ENCODE measurements at regions of chr16 and their contacts with region 1.

Region 1: DNA sequence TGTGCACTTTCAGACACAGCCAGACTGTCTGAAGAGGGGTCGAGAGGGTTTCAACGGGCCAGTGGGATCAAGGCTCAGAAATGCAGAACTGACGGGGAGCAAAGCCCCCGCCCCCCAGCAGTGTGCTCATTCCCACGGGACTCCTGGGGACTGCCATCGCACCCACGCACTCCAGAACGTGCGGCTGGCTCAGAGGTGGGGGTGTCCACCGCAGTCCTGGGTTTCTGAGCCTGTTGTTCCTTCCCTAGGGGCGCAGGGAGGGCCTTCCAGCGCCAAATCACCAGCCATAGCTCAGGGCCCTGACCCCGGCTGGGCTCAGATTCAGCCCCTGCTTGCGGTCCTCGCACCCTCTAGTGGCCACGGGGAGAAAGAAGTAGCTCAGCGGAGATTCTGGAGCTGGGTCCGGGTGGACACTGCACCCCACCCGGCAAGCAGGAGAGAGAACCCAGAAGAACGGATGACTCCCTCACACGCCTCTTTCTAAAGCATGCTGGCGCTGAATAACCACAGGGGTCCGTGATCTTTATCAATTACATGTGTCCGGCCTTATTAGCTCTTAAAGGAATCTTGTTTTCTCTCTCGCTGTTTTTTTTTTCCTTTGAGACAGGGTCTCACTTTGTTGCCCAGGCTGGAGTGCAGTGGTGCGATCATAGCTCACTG is 45.0 kb upstream of the USP7 start:
- DNase-seq: peak; percentile 61 to 93
- H3K4me3 ChIP-seq: 0 out of 8 replicates have a peak overlapping the region, but pooled peaks of 1 of the 4 experiments have one; percentile 4
- H3K27ac ChIP-seq: no peak overlapping the region
- H3K4me1 ChIP-seq: peaks cover 0 to 10% (median 5%) of the 10 kb centered on the region in 4 experiments; a peak in 6 of 7 replicates
- H3K27me3 ChIP-seq: no peaks in the 10 kb centered on the region; a peak in 1 of 7 replicates
- CTCF ChIP-seq: peak; percentile 87 to 97 (median 97)
- EP300 ChIP-seq: no peak
- POLR2A ChIP-seq: no peak
- RAD21 ChIP-seq: peak; percentile 95 to 98

Region 2: GRCh38 chr16:8295513-8296237 is 713.1 kb before region 1 on chr16:
- CTCF ChIA-PET with region 1: no interaction called
- POLR2A ChIA-PET with region 1: no interaction called
- DNase-seq: no peak
- H3K4me3 ChIP-seq: no peak overlapping the region
- H3K27ac ChIP-seq: no peak overlapping the region
- H3K4me1 ChIP-seq: no peaks in the 10 kb centered on the region
- H3K27me3 ChIP-seq: no peaks in the 10 kb centered on the region
- CTCF ChIP-seq: no peak
- EP300 ChIP-seq: no peak
- POLR2A ChIP-seq: no peak
- RAD21 ChIP-seq: no peak

Region 3: DNA sequence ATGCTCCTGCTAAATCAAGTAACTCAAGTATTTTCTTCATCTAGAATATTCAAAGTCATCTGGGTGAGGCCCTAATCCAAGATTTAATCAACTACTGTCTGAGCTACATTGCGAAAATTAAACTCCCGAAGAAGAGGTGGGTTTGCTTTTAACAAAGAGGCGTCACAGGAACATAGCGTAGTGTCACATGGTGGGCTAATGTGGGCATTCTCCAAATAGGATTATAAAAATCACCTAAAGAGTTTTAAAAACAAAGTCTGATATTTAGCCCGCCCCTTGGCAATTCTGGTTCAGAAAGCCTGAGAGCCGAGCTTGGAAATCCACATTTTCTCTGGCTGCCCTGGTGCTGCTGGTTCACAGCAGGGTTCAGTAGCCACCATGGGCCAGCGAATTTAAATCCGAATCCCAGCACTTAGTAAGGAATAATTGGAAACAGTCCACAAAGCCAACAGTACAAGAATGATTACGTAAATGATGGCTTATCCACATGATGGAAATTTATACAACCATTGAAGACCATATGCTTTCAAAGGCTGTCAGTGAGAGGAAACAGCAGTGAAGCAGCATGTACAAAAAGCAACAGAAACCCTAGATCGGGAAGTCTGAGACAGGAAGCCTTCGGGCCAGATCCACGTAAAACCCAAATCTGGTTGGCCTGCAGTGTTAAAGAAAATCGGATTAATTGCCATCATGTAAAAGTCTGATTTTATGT is 202.3 kb before region 1 on chr16:
- CTCF ChIA-PET with region 1: no interaction called
- POLR2A ChIA-PET with region 1: no interaction called
- DNase-seq: no peak
- H3K4me3 ChIP-seq: no peak overlapping the region
- H3K27ac ChIP-seq: no peak overlapping the region
- H3K4me1 ChIP-seq: no peaks in the 10 kb centered on the region
- H3K27me3 ChIP-seq: no peaks in the 10 kb centered on the region
- CTCF ChIP-seq: no peak
- EP300 ChIP-seq: no peak
- POLR2A ChIP-seq: no peak
- RAD21 ChIP-seq: no peak

Region 4: DNA sequence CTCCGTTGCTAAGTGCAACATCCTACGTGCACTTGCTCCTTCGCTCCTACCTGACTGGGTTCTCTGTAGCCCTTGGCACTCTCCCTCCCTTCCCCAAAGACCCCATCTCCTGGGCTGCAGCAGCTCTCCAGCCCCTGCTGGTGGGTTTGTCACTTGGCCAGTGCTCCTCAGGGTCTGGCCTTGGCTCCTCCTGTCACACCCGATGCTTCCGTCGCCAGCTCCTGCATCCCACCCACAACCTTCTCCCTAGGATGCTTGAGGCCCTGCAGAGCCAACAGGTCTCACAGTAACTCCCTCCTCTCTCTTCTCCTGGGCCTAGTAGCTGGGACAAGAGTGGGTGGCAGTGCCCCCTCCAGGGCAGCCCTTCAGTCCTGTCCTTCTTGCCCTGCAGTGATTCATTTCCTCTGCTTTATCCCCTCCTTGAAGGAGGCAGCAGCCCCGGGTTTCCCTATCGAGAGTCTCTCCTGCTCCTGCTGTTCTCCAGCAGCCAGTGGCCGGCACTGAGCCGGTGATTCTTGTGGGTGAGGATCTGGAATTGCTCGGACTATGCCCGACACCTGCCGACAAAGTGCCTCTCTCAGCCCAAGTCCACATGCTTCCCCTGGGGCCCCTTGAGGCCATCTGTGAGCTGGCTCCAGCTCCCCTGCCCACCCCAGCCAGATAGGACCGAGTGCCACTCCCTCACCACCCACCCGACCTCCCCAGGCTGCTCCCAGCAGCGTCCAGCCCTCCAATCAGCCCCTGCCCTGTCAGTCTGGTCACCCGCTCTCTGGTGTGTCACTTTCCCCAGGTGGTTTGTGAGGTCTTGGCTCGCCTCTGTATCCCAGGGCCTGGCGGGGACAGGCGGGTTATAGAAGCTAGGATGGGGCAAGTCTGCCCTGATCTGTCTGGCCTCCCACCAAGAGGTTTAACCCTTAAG is 122.8 kb before region 1 on chr16:
- CTCF ChIA-PET with region 1: interaction called, 37 read pairs
- POLR2A ChIA-PET with region 1: no interaction called
- DNase-seq: no peak
- H3K4me3 ChIP-seq: no peak overlapping the region; a peak in 1 of 8 replicates
- H3K27ac ChIP-seq: no peak overlapping the region
- H3K4me1 ChIP-seq: peaks cover 0 to 17% (median 9%) of the 10 kb centered on the region in 4 experiments; a peak in 5 of 7 replicates
- H3K27me3 ChIP-seq: no peaks in the 10 kb centered on the region
- CTCF ChIP-seq: peak; percentile 27 to 47 (median 30); a peak in 3 of 4 replicates
- EP300 ChIP-seq: no peak
- POLR2A ChIP-seq: no peak
- RAD21 ChIP-seq: peak in 1 of 2 experiments; percentile 30; a peak in 2 of 4 replicates

Region 5: DNA sequence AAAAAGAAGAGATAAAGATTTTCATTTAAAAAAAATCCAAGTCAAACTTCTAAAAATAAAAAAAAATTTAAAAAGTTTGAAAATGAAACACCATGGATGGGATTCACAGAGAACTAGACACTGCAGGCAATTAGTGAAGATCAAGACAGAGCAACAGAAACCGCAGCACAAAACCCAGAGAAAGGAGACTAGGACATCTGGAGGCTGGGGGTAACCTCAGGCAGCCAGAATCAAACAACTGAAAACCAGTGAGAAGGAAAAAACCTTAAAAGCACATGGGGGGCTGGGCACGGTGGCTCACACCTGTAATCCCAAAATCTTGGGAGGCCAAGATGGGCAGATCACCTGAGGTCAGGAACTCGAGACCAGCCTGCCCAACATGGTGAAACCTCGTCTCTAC is 95.9 kb before region 1 on chr16:
- CTCF ChIA-PET with region 1: interaction called, 39 read pairs
- POLR2A ChIA-PET with region 1: no interaction called
- DNase-seq: no peak
- H3K4me3 ChIP-seq: no peak overlapping the region
- H3K27ac ChIP-seq: no peak overlapping the region
- H3K4me1 ChIP-seq: no peaks in the 10 kb centered on the region; a peak in 1 of 7 replicates
- H3K27me3 ChIP-seq: no peaks in the 10 kb centered on the region
- CTCF ChIP-seq: no peak
- EP300 ChIP-seq: no peak
- POLR2A ChIP-seq: no peak
- RAD21 ChIP-seq: no peak

Region 6: DNA sequence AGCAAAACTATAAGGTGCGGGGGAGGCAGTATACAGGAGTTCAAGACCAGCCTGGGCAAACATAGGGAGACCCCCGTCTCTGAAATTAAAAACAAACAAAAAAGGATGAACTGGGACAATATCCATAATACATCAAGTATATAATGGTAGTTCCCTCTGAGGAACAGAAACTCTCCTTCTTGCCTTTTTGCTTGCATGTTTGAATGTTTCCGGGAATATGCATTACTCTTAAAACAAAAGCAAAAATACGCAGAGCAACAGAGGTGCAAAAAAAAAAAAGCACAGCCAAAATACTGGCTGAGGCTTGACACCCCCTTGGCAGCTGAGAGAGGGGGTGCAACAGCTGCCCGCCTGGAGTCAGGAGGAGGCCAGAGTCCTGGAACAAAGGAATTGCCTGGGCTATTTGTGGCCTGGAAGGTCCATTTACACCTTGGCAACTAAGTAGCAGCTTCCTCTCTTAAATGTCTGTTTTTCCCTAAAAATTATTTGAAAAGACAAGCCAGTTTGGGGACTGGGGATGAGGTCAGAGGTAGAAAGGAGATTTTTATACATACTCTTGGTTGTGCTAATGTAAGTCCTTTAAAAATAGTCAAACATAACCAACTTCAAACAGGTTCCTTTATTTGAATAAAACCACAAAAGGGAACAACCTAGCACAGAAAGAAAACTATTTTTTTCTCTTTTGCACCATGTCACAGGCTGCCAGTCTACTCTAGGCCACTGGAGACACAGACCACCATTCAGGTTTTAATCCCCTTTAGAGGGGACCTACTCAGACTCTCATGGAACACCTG is 64.6 kb before region 1 on chr16:
- CTCF ChIA-PET with region 1: interaction called, 189 read pairs
- POLR2A ChIA-PET with region 1: interaction called, 4 read pairs
- DNase-seq: no peak
- H3K4me3 ChIP-seq: peak overlapping the region in 1 of 4 experiments; percentile 16; a peak in 1 of 8 replicates
- H3K27ac ChIP-seq: no peak overlapping the region
- H3K4me1 ChIP-seq: peaks cover 6 to 15% (median 10%) of the 10 kb centered on the region in 4 experiments
- H3K27me3 ChIP-seq: no peaks in the 10 kb centered on the region
- CTCF ChIP-seq: no peak
- EP300 ChIP-seq: no peak
- POLR2A ChIP-seq: no peak
- RAD21 ChIP-seq: no peak

Region 7: GRCh38 chr16:8963825-8964441 is 44.8 kb before region 1 on chr16 and contains the start of gene USP7:
- CTCF ChIA-PET with region 1: interaction called, 25 read pairs
- POLR2A ChIA-PET with region 1: interaction called, 7 read pairs
- DNase-seq: peak; percentile 46 to 89
- H3K4me3 ChIP-seq: peak within 1 kb of the TSS; percentile 63 to 85 (median 76)
- H3K27ac ChIP-seq: 0 out of 2 replicates have a peak within 1 kb of the TSS, but pooled peaks have one; percentile 38
- H3K4me1 ChIP-seq: peaks cover 25 to 40% (median 26%) of the 10 kb centered on the region in 4 experiments
- H3K27me3 ChIP-seq: peaks cover 0 to 7% (median 2%) of the 10 kb centered on the region in 4 experiments; a peak in 3 of 7 replicates
- CTCF ChIP-seq: no peak
- EP300 ChIP-seq: no peak
- POLR2A ChIP-seq: no peak
- RAD21 ChIP-seq: no peak
- total RNA-seq, gene USP7: 208 and 211 TPM in 2 replicates

Region 8: DNA sequence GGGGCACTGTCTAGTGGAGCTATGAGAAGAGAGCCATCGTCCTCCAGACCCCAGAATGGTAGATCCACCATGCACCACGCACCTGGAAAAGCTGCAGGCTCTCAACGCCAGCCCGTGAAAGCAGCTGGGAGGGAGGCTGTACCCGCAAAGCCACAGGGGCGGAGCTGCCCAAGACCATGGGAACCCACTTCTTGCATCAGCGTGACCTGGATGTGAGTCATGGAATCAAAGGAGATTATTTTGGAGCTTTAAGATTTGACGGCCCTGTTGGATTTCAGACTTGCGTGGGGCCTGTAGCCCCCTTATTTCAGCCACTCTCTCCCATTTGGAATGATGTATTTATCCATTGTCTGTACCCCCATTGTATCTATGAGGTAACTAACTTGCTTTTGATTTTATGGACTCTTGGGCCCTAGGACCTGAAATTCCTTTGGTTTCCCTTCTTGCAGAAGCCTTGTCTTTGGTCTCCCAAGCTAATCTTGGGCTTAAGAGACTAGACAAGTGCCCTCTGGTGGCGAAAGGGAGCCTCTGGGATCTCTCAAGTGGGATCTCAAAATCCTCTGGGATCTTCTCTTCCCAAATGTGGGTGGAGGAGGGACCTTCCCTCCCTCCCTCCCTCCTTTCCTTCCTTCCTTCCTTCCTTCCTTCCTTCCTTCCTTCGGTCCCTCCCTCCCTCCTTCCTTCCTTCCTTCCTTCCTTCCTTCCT is 24.5 kb after region 1 on chr16:
- CTCF ChIA-PET with region 1: interaction called, 16 read pairs
- POLR2A ChIA-PET with region 1: interaction called, 6 read pairs
- DNase-seq: peak in 1 of 2 experiments; percentile 70
- H3K4me3 ChIP-seq: no peak overlapping the region
- H3K27ac ChIP-seq: no peak overlapping the region
- H3K4me1 ChIP-seq: no peaks in the 10 kb centered on the region
- H3K27me3 ChIP-seq: no peaks in the 10 kb centered on the region
- CTCF ChIP-seq: peak; percentile 33 to 77 (median 72)
- EP300 ChIP-seq: no peak
- POLR2A ChIP-seq: no peak
- RAD21 ChIP-seq: peak; percentile 56 to 66

Region 9: DNA sequence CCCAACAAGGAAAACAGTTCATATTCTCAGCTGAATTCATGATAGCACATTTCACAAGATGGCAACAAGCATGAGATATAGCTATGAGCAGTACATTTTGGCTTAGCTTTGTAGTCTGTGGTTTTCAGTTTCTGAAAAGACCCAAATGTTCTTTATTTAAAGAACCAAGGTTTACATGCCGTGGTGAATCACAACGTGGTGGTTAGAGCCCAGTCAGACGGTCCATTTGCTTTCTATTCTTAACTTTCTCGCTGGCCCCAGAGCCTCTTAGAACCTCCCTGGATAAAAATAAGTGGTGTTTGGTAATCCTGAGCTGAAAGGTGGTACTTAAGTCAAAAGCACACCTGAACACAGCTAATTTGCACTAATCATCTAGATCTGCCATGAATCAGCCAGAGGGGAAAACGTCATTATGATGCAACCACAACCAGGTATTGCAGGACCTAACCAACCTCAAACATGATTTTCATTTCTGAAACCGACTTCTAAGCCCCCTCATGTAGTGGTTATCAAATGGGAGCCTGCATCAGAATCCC is 64.1 kb after region 1 on chr16:
- CTCF ChIA-PET with region 1: no interaction called
- POLR2A ChIA-PET with region 1: no interaction called
- DNase-seq: no peak
- H3K4me3 ChIP-seq: no peak overlapping the region
- H3K27ac ChIP-seq: no peak overlapping the region
- H3K4me1 ChIP-seq: peaks cover 0 to 4% (median 0%) of the 10 kb centered on the region in 4 experiments; a peak in 1 of 7 replicates
- H3K27me3 ChIP-seq: no peaks in the 10 kb centered on the region; a peak in 1 of 7 replicates
- CTCF ChIP-seq: no peak
- EP300 ChIP-seq: no peak
- POLR2A ChIP-seq: no peak
- RAD21 ChIP-seq: no peak

Region 10: GRCh38 chr16:9206156-9206555 is 197.4 kb after region 1 on chr16:
- CTCF ChIA-PET with region 1: no interaction called
- POLR2A ChIA-PET with region 1: no interaction called
- DNase-seq: no peak
- H3K4me3 ChIP-seq: no peak overlapping the region
- H3K27ac ChIP-seq: no peak overlapping the region
- H3K4me1 ChIP-seq: peaks cover 0 to 4% (median 0%) of the 10 kb centered on the region in 4 experiments; a peak in 1 of 7 replicates
- H3K27me3 ChIP-seq: no peaks in the 10 kb centered on the region
- CTCF ChIP-seq: no peak
- EP300 ChIP-seq: no peak
- POLR2A ChIP-seq: no peak
- RAD21 ChIP-seq: no peak